ENCODE measurements at regions of chr4 and their contacts with region 1.

Region 1: DNA sequence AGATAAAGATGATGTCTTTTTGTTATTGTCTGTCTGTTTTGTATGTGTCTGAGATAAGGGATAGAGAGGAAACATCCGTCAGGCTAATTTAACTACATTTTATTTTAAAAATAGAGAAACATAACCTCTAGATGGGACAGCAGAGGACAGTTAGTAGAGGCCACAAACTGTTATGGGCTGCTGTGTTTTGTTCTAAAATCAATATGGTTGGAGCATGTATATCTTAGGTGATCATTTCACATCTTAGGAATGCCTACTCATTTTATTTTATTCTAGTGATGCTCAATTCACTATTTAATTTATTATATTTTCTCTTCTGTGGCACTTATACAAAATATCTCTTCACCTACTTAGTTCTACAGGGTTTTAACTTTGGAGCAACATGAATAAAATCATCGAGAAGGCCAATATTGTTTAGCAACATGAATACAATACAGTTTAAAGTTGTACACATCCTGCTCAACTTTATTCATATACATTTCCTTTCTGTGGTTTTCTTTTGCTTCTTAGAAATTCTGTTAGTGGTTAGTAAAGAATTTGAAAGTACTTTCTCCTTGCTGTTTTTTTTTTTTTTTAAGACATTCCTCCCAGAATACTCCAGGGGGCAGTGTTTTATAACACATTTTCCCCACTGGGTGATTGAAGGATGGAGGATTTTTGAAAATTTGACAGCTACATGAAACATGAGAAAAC is 392.9 kb downstream of the UNC5C start:
- DNase-seq: no peak
- ATAC-seq: peak; percentile 74
- H3K4me3 Mint-ChIP-seq: no peak overlapping the region
- H3K27ac Mint-ChIP-seq: peak overlapping the region; percentile 18
- H3K4me1 Mint-ChIP-seq: peaks cover 11% of the 10 kb centered on the region
- H3K27me3 Mint-ChIP-seq: no peaks in the 10 kb centered on the region
- CTCF ChIP-seq: peak; percentile 64

Region 2: DNA sequence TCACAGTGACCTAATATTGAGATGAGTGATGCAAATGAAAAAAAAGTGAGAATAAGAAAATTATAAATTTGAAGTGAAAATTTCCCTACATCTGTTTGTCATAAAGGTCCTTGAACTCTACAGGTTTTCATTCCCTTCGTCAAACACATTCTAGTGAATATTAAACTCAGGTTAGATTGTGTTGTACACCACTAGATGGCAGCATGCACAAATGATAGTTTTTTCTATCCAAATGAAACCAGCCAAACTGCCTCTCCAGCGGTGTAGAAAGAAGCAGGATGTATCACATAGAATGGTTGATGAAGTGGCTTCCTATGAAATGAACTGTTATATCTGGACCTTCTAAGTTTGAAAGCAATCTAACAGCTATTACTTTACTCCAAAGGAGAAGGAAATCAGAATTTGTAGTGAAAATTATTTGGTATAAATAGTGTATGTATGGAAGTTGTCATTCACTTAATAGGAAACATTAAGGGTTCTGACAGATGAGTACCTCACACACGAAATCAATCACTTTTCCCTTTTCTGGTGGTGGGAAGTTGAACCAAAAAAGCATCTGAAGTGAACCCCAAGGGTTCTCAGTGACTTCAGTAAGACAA is 10.1 kb after region 1 on chr4:
- CTCF ChIA-PET with region 1: interaction called, 14 read pairs
- POLR2A ChIA-PET with region 1: no interaction called
- intact Hi-C with region 1: no loop called
- DNase-seq: peak; percentile 37
- ATAC-seq: peak; percentile 61
- H3K4me3 Mint-ChIP-seq: no peak overlapping the region
- H3K27ac Mint-ChIP-seq: no peak overlapping the region
- H3K4me1 Mint-ChIP-seq: no peaks in the 10 kb centered on the region
- H3K27me3 Mint-ChIP-seq: no peaks in the 10 kb centered on the region
- CTCF ChIP-seq: peak; percentile 60

Region 3: DNA sequence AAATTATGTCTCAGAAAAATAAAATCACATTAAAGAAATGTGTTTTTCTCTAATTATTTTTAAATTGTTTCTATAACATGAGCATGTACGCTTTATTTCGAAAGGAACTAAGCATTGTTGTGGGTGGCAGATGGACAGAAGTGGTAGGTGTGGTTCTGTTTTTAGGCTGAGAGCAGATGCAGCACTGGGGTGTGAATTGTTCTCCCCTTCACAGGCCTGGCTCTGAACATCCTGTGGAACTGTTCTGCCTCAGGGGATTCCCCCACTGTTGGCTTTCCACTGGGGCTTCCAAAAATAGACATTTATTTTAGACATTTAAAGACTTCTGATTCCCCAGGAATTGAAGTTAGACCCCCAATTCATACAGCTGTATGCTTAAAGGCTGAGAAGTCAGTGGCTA is 642.1 kb after region 1 on chr4:
- CTCF ChIA-PET with region 1: no interaction called
- POLR2A ChIA-PET with region 1: no interaction called
- intact Hi-C with region 1: no loop called
- DNase-seq: no peak
- ATAC-seq: no peak
- H3K4me3 Mint-ChIP-seq: no peak overlapping the region
- H3K27ac Mint-ChIP-seq: no peak overlapping the region
- H3K4me1 Mint-ChIP-seq: no peaks in the 10 kb centered on the region
- H3K27me3 Mint-ChIP-seq: no peaks in the 10 kb centered on the region
- CTCF ChIP-seq: no peak

Measured in activated CD8-positive, alpha-beta T cell treated with anti-CD3 and anti-CD28 coated beads for 36 hours (primary cell).